ENCODE measurements at regions of chr13 and their contacts with region 1.

Region 1: GRCh38 chr13:100129605-100130004 is 40.7 kb downstream of the PCCA start:
- DNase-seq: peak; percentile 34
- ATAC-seq: peak; percentile 80
- H3K4me3 ChIP-seq: no peak overlapping the region
- H3K27ac ChIP-seq: peak overlapping the region; percentile 15
- H3K4me1 ChIP-seq: peaks cover 11% of the 10 kb centered on the region
- H3K27me3 ChIP-seq: no peaks in the 10 kb centered on the region
- CTCF ChIP-seq: no peak
- EP300 ChIP-seq: no peak
- POLR2A ChIP-seq: no peak
- RAD21 ChIP-seq: no peak

Region 2: DNA sequence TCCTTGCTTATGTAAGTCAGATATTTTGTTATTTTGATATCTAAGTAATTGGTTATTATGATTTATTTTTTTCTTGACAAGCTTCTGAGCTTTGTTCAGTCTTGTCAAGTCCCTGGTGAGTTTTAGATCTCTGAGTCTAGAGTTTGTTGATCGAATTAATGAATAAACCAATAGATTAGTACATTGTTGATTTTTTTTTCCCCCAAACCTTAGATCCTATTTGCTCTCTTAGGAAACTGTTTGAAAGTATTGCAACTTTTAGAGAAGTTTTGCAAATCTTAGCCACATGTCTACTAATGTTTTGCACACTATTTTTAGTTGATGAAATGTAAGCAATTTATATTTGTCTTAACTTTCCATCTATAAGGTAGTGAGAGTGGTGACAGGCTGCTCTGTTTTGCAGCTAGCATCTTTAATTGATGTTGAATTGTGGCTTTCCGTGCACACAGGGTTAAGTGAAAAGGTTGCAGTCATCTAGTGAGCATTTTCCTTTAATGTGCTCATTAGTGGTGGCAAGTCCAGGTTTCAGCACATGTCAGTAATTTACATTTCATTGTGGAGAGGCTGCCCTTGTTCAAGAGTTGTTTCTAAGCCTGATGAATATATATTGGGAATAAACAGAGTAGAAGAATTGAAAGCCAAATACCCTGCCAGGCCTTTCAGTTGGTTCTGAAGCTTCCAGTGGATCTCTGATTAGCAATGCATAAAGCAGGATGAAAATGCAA is 45.6 kb after region 1 on chr13:
- CTCF ChIA-PET with region 1: no interaction called
- POLR2A ChIA-PET with region 1: no interaction called
- RAD21 ChIA-PET with region 1: no interaction called
- SMC1A ChIA-PET with region 1: no interaction called
- in situ Hi-C with region 1: no loop called
- intact Hi-C with region 1: loop called (anchors 1 kb)
- DNase-seq: no peak
- ATAC-seq: peak; percentile 60
- H3K4me3 ChIP-seq: no peak overlapping the region
- H3K27ac ChIP-seq: no peak overlapping the region
- H3K4me1 ChIP-seq: no peaks in the 10 kb centered on the region
- H3K27me3 ChIP-seq: no peaks in the 10 kb centered on the region
- CTCF ChIP-seq: no peak
- EP300 ChIP-seq: no peak
- POLR2A ChIP-seq: no peak
- RAD21 ChIP-seq: no peak

Region 3: GRCh38 chr13:100254002-100254401 is 124.4 kb after region 1 on chr13:
- CTCF ChIA-PET with region 1: no interaction called
- POLR2A ChIA-PET with region 1: no interaction called
- RAD21 ChIA-PET with region 1: no interaction called
- SMC1A ChIA-PET with region 1: no interaction called
- in situ Hi-C with region 1: no loop called
- intact Hi-C with region 1: no loop called
- DNase-seq: no peak
- ATAC-seq: no peak
- H3K4me3 ChIP-seq: no peak overlapping the region
- H3K27ac ChIP-seq: no peak overlapping the region
- H3K4me1 ChIP-seq: no peaks in the 10 kb centered on the region
- H3K27me3 ChIP-seq: no peaks in the 10 kb centered on the region
- CTCF ChIP-seq: no peak
- EP300 ChIP-seq: no peak
- POLR2A ChIP-seq: no peak
- RAD21 ChIP-seq: no peak

Measured in GM12878 (cell line).